Cardiac septum (tissue), 1 donor: ENCODE measurements at regions of chr2 and their contacts with region 1.

Region 1: DNA sequence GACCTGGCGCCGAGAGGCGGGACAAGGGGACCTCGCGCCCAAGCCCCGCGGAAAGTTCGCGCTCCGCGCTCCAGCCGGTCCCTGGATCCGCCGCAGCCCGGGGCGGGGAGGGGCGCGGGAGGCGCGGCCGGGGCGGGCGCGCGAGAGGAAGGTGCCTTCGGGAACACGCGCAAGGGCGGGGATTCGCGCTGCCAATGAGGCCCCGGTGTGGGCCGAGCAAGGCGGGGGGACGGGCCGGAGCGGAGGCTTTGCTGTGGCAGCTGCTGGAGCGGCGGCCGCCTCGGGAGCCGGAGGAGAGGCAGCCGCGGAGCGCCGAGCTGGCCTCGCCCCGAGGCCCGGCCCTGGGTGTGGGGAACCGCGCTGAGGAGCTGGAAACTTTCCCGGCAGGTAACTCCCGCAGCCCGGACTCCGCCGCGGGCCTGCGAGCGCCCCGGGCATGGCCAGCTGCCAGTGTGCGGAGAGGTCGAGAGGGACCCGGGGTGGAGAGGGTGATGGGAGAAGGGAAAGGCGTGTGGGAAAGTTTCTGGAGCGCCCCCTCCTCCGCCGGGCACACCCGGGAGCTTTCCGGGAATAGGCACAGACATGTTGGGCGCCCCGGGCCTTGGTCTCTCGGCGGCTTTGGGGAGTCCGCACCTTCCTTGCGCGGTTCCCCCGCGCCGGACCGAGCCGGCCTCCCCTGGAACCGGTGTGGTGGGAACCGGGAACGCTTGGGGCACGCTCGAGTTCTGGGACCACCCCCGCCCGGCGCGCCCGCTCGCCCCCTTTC is at the start of gene TANC1:
- DNase-seq: peak; percentile 95
- total RNA-seq, gene TANC1: 55.6 TPM

Region 2: GRCh38 chr2:158903711-158904443 is 64.7 kb before region 1 on chr2:
- intact Hi-C with region 1: loop called (anchors 5 kb)
- DNase-seq: no peak

Region 3: GRCh38 chr2:158943973-158944372 is 24.6 kb before region 1 on chr2:
- intact Hi-C with region 1: no loop called
- DNase-seq: no peak

Region 4: DNA sequence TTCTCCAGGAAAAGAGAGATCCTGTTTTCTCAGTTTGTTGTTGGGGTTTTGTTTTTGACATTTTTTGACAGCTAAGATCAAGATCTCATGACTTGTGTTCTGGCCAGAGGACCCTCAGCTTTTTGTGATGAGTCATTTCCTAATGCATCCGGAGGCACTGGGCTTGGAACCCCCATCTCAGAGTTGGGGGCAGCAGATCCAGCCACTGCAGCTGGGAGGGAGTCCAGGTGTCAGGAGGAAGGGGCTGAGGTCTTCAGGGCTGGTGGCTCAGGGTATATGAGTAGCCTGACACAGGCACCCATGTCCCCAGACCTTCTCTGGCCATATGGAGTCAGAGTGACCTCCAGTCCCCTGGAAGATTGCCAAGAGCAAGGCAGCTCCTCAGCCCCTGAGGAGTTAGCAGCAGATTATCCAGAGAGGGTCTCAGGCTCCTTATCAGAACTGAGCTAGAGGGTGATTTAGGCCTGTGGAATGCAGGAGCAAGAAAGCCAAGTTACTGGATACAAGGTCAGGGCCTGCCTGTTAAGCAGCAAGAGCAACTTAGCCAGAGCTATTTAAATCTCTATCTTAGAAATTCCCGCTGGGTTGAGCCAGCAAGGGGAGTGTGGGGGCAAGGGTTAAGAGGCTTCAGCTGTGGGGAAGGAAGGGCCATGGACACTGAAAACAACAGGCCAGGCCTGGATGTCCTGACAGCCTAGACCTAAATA is 62.2 kb after region 1 on chr2:
- intact Hi-C with region 1: loop called (anchors 2 kb)
- DNase-seq: peak; percentile 78

Region 5: DNA sequence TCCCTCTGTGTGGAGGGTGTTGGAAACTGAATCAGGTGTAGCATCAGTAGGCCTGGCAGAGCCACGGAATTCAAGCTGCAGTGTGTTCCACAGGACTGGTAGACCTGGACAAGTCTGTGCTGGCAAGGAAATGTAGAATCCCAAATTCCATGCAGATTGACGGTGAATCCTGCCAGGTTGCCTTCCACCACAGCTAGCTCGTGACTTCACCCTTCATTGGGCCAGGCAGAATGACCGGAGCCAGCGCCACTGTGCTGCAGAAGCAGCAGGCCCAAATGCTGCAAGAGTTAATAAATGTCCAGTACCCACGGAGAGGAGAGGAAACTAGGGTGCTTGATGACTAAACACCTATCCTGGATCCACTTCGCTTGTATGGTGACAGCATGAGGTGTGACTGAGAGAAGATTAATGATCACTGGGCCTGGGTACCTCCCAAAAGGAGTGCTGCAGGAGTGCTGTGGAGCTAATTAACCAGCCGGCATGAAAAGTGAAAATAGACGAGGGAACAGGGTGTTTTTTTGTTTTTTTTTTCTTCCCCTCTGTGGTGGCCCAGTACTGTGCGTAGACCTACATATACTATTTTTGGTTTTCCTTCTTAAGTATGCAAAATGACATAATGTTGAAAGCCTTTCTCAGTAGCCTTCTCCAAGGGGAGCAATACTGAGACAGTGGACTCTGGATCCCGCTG is 122.1 kb after region 1 on chr2:
- intact Hi-C with region 1: loop called (anchors 5 kb)
- DNase-seq: no peak

Region 6: DNA sequence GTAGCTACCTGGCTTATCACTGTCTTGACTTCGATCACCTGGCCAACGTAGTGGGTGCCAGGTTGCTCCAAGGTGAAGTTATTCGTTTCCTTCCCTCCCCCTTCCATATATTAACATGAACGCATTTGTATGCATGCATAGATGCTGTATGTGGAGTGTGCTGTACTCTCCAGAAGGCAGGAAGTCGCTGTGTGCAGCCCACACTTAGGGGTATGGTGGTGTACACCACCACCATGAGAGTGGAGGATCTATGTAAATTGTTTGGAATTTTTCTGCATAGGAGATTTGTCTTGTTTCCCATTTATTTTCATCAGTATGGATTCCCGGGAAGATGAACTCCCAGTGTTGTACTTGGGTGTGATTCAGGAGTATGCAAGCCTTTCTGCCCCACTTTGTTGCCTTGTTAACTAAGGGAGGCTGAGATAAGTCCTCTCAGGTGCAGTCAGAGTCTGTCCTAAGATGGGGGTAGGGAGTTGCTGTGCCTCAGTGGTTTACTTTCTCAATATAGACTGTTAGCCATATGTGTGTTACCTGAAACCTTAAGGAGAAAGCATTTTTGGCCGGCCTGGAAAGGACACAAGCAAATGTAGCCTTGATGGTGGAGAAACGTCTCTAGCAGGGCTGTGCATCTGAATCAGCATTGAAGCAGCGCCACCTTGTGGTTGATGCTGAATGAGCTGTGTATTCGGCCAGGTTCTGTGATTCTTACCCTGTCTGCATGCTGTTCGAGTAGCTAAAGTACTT is 149.7 kb after region 1 on chr2:
- intact Hi-C with region 1: loop called (anchors 2 kb)
- DNase-seq: peak; percentile 92